CD4-positive, alpha-beta memory T cell (primary cell): ENCODE measurements at regions of chr9 and their contacts with region 1.

Region 1: GRCh38 chr9:109110326-109111021 is 9.3 kb downstream of the TMEM245 start:
- DNase-seq: peak; percentile 50 to 71 (median 64)
- H3K4me3 ChIP-seq: peak overlapping the region in 1 of 2 donors; percentile 29
- H3K4me3 Mint-ChIP-seq: peak overlapping the region; percentile 17 to 82 (median 78)
- H3K27ac ChIP-seq: peak overlapping the region; percentile 57
- H3K27ac Mint-ChIP-seq: peak overlapping the region; percentile 82 to 98 (median 95)
- H3K4me1 ChIP-seq: peaks cover 88% of the 10 kb centered on the region
- H3K4me1 Mint-ChIP-seq: peaks cover 54 to 84% (median 70%) of the 10 kb centered on the region in 4 donors
- H3K27me3 ChIP-seq: no peaks in the 10 kb centered on the region
- H3K27me3 Mint-ChIP-seq: no peaks in the 10 kb centered on the region

Region 2: DNA sequence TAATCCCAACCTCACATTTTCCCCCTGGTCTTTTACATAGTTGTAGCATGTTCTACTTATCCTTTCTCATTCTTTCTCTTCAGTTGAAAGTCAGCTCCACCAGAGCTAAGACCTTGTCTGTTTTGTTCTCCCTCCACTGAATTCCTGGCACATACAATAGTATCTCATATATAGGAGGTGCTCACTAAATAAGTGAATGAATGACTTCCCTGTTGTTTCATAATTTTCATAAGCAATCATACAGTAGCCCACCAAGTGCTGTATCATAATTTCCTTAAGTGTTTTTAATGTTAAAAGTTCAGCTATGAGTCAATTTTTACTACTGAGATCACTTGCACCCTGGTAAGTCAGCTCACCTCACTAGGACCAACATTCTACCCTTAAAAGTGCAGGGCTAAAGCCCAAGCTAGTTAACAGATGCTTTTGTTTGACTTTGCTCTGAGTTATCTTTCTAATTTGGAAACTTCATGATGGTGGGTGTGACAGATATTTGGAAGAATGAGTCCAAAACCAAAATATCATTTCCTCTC is 18.4 kb before region 1 on chr9:
- CTCF ChIA-PET with region 1: interaction called, 4 read pairs
- POLR2A ChIA-PET with region 1: interaction called, 5 read pairs
- intact Hi-C with region 1: loop called (anchors 2 kb)
- DNase-seq: no peak
- H3K4me3 ChIP-seq: no peak overlapping the region
- H3K4me3 Mint-ChIP-seq: no peak overlapping the region
- H3K27ac ChIP-seq: no peak overlapping the region
- H3K27ac Mint-ChIP-seq: peak overlapping the region in 4 of 7 donors; percentile 16 to 75 (median 60)
- H3K4me1 ChIP-seq: peaks cover 24% of the 10 kb centered on the region
- H3K4me1 Mint-ChIP-seq: peaks cover 25 to 48% (median 38%) of the 10 kb centered on the region in 4 donors
- H3K27me3 ChIP-seq: no peaks in the 10 kb centered on the region
- H3K27me3 Mint-ChIP-seq: no peaks in the 10 kb centered on the region

Region 3: DNA sequence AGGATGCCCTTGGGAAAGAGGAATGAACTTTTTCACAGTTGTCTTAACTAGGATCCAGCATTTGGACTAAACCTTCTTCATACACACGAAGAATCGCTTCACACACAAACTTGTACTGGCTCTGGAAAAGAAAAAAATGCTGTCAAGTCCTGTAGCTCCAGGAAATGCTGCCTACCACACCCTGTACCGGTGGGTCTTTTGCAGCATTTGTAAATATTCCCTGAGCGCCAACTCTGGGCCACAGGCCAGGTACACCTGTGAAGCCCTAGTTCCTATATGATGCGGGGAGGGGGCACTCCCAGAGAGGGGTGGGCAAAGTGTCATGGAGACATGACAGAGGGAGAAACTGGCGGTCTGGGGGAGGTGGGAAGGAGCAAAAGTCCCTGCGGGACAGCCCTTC is 269.0 kb after region 1 on chr9:
- CTCF ChIA-PET with region 1: no interaction called
- POLR2A ChIA-PET with region 1: no interaction called
- intact Hi-C with region 1: no loop called
- DNase-seq: no peak
- H3K4me3 ChIP-seq: no peak overlapping the region
- H3K4me3 Mint-ChIP-seq: no peak overlapping the region
- H3K27ac ChIP-seq: no peak overlapping the region
- H3K27ac Mint-ChIP-seq: no peak overlapping the region
- H3K4me1 ChIP-seq: no peaks in the 10 kb centered on the region
- H3K4me1 Mint-ChIP-seq: no peaks in the 10 kb centered on the region
- H3K27me3 ChIP-seq: no peaks in the 10 kb centered on the region
- H3K27me3 Mint-ChIP-seq: peaks cover 4 to 13% of the 10 kb centered on the region in 2 donors